ENCODE measurements at regions of chr6 and their contacts with region 1.

Region 1: GRCh38 chr6:138001750-138002349 is 105.4 kb downstream of the PERP start:
- DNase-seq: peak in 1 of 3 donors; percentile 59
- ATAC-seq: peak; percentile 75 to 88 (median 84)
- H3K4me3 ChIP-seq: no peak overlapping the region
- H3K27ac ChIP-seq: no peak overlapping the region
- H3K4me1 ChIP-seq: no peaks in the 10 kb centered on the region
- H3K27me3 ChIP-seq: no peaks in the 10 kb centered on the region
- CTCF ChIP-seq: peak; percentile 81 to 94 (median 92)
- POLR2A ChIP-seq: no peak

Region 2: GRCh38 chr6:138109042-138109997 is 107.5 kb after region 1 on chr6:
- intact Hi-C with region 1: loop called (anchors 5 to 10 kb)
- DNase-seq: peak in 2 of 3 donors; percentile 34 to 61
- ATAC-seq: no peak
- H3K4me3 ChIP-seq: no peak overlapping the region
- H3K27ac ChIP-seq: no peak overlapping the region
- H3K4me1 ChIP-seq: peaks cover 0 to 13% (median 3%) of the 10 kb centered on the region in 4 donors
- H3K27me3 ChIP-seq: no peaks in the 10 kb centered on the region
- CTCF ChIP-seq: peak; percentile 96 to 99 (median 97)
- POLR2A ChIP-seq: no peak

Region 3: GRCh38 chr6:138115877-138116660 is 114.2 kb after region 1 on chr6:
- intact Hi-C with region 1: loop called in 1 of 2 experiments (anchors 10 kb)
- DNase-seq: peak; percentile 52 to 63 (median 57)
- ATAC-seq: peak; percentile 95 to 97 (median 96)
- H3K4me3 ChIP-seq: no peak overlapping the region
- H3K27ac ChIP-seq: peak overlapping the region in 2 of 3 donors; percentile 27 to 45
- H3K4me1 ChIP-seq: no peaks in the 10 kb centered on the region
- H3K27me3 ChIP-seq: no peaks in the 10 kb centered on the region
- CTCF ChIP-seq: peak; percentile 70 to 91 (median 72)
- POLR2A ChIP-seq: no peak

Measured in right lobe of liver (tissue), 6 donors.